HEK293 (cell line): ENCODE measurements at regions of chrX and their contacts with region 1.

Region 1: GRCh38 chrX:105190252-105190853 is 30.1 kb downstream of the TEX13A start:
- H3K4me3 ChIP-seq: no peak overlapping the region
- H3K27ac ChIP-seq: no peak overlapping the region
- H3K4me1 ChIP-seq: no peaks in the 10 kb centered on the region
- CTCF ChIP-seq: 0 out of 2 replicates have a peak, but pooled peaks have one; percentile 10

Region 2: GRCh38 chrX:105018865-105019264 is 171.5 kb before region 1 on chrX:
- CTCF ChIA-PET with region 1: no interaction called
- POLR2A ChIA-PET with region 1: no interaction called
- H3K4me3 ChIP-seq: no peak overlapping the region
- H3K27ac ChIP-seq: no peak overlapping the region
- H3K4me1 ChIP-seq: no peaks in the 10 kb centered on the region
- CTCF ChIP-seq: no peak

Region 3: DNA sequence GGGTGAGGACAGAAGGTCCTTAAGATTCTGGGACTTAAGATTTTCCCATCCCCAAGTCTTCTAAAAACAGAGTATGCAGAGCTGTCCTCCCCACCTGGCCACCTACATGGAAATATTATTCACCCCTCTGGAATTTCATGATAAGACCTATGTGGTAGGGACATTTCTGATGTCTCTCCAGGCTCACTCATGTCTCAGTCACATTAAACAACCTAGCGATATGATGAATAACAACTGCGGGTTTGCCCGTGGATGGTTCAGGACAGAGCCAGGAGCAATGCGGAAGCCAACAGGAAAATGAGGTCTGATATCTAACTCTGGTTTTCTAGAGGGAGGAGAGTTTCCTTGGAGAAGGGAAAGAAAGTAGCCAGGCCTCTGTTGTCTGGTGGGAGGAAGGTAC is 17.3 kb before region 1 on chrX:
- CTCF ChIA-PET with region 1: interaction called, 11 read pairs
- POLR2A ChIA-PET with region 1: no interaction called
- H3K4me3 ChIP-seq: no peak overlapping the region
- H3K27ac ChIP-seq: no peak overlapping the region
- H3K4me1 ChIP-seq: no peaks in the 10 kb centered on the region
- CTCF ChIP-seq: no peak

Region 4: GRCh38 chrX:105210258-105210657 is 19.9 kb after region 1 on chrX:
- CTCF ChIA-PET with region 1: interaction called, 14 read pairs
- POLR2A ChIA-PET with region 1: no interaction called
- H3K4me3 ChIP-seq: no peak overlapping the region
- H3K27ac ChIP-seq: no peak overlapping the region
- H3K4me1 ChIP-seq: no peaks in the 10 kb centered on the region
- CTCF ChIP-seq: no peak

Region 5: GRCh38 chrX:105307762-105308161 is 117.4 kb after region 1 on chrX:
- CTCF ChIA-PET with region 1: no interaction called
- POLR2A ChIA-PET with region 1: no interaction called
- H3K4me3 ChIP-seq: no peak overlapping the region
- H3K27ac ChIP-seq: no peak overlapping the region
- H3K4me1 ChIP-seq: no peaks in the 10 kb centered on the region
- CTCF ChIP-seq: no peak